ENCODE measurements at regions of chr1 and their contacts with region 1.

Region 1: GRCh38 chr1:203692565-203693470 is 66.2 kb downstream of the ATP2B4 start:
- DNase-seq: peak; percentile 97
- H3K4me3 ChIP-seq: no peak overlapping the region
- H3K27ac ChIP-seq: peak overlapping the region; percentile 97
- H3K4me1 ChIP-seq: peaks cover 28% of the 10 kb centered on the region
- H3K27me3 ChIP-seq: no peaks in the 10 kb centered on the region
- CTCF ChIP-seq: no peak

Region 2: DNA sequence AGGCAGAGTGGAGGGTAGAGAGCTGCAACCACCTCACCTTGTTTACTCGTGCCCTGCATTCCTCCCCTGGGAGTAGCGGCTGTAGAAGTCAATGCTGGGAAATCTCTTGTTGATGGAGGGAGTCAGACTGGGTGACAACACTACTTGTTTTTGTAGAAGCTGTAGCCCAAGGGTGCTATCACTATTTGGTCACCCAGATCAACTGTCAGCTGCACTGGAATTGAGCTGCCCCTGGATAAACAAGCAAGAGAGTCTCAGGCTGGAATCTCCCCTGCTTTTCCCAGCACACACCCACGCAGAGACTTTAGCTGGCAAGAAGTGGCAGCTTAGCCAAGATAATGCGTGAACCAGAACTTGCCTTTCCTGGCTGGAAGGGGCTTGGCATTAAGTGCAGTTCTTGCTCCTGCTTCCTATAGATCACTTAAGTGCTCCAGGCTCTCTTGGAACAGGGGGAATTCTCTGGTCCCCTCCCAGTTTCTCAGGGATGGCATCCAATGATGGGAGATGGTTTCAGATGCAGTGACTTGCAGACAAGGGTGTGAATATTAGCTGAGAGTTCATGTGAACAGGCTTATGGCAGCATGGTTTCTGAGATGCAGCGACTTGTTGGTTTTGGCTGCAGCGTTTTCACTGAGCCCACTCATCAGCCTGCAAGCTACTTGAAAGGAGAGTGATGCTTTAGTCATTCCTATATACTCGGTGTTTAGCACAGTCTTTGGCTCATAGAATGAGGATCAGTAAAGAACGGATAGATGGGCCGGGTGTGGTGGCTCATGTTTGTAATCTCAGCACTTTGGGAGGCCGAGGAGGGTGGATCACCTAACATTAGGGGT is 49.4 kb before region 1 on chr1:
- CTCF ChIA-PET with region 1: no interaction called
- dilution Hi-C with region 1: no loop called
- in situ Hi-C with region 1: no loop called
- intact Hi-C with region 1: loop called (anchors 1 kb)
- DNase-seq: peak; percentile 86
- H3K4me3 ChIP-seq: no peak overlapping the region
- H3K27ac ChIP-seq: peak overlapping the region; percentile 51
- H3K4me1 ChIP-seq: peaks cover 43% of the 10 kb centered on the region
- H3K27me3 ChIP-seq: no peaks in the 10 kb centered on the region
- CTCF ChIP-seq: no peak

Region 3: DNA sequence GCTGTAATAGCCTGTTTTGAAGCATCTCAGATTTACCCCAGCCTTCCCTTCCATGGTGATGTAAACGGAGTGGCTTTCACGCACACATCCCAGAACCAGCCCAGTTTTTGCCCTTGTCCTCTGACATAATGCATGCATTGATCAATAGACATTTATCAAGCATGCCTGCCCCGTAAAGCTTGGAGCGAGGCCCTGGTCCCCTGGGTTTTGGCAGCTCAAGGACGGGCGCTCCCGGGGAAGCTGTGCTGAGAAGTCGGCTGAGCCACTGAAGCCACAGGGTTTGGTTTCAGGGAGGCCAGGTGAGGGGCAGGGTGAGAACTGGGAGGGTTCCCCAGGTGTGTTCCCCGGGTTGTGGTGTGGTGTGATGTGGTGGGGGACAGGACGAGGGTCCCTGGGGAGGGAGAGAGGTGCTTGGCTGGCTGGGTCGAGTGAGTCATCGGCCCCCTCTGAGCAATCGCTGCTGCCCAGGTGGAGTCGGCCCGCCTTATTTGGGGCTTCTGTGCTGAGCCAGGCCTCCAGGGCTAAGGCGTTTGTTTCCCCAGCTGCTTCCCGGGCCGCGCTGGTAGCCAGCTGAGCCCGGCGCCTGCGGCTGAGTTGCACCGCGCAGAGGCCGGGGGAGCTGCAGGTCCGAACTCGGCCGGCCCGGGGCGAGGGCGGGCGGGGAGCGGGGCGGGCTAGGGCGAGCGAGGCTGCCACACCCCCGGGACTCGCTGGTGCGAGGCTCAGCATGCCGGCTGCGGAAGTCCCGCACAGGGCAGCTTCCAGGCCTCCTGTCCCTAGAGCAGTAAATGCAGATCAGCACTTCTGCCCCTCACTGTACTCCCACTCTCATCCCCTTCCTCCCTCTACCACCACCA is 42.6 kb before region 1 on chr1:
- CTCF ChIA-PET with region 1: no interaction called
- dilution Hi-C with region 1: no loop called
- in situ Hi-C with region 1: no loop called
- intact Hi-C with region 1: loop called (anchors 1 kb)
- DNase-seq: peak; percentile 96
- H3K4me3 ChIP-seq: peak overlapping the region in 1 of 3 experiments; percentile 32
- H3K27ac ChIP-seq: peak overlapping the region; percentile 94
- H3K4me1 ChIP-seq: peaks cover 35% of the 10 kb centered on the region
- H3K27me3 ChIP-seq: no peaks in the 10 kb centered on the region
- CTCF ChIP-seq: no peak

Region 4: DNA sequence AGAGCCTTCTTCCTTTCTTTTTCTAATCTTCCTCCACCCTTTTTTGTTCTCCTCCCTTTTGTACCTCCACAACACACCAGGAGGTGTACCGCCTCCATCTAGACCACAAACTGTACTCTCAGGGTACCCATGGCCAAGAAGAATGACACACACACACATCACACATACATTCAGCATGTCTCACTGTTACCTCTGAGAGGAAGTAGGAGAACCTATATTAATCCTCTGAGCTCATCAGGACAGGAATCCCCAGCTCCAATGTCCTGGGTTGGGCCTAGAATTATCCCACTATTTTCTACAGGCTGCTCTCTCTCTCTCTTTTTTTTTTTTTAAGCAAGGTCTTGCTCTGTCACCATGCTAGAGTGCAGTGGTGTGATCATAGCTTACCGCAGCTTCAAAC is 29.5 kb before region 1 on chr1:
- CTCF ChIA-PET with region 1: interaction called, 3 read pairs
- dilution Hi-C with region 1: no loop called
- in situ Hi-C with region 1: no loop called
- intact Hi-C with region 1: loop called (anchors 1 kb)
- DNase-seq: peak; percentile 100
- H3K4me3 ChIP-seq: no peak overlapping the region
- H3K27ac ChIP-seq: peak overlapping the region; percentile 97
- H3K4me1 ChIP-seq: peaks cover 34% of the 10 kb centered on the region
- H3K27me3 ChIP-seq: no peaks in the 10 kb centered on the region
- CTCF ChIP-seq: peak; percentile 10 to 42

Region 5: GRCh38 chr1:203673550-203674427 is 19.0 kb before region 1 on chr1:
- CTCF ChIA-PET with region 1: no interaction called
- dilution Hi-C with region 1: no loop called
- in situ Hi-C with region 1: no loop called
- intact Hi-C with region 1: loop called (anchors 1 kb)
- DNase-seq: peak; percentile 96
- H3K4me3 ChIP-seq: no peak overlapping the region
- H3K27ac ChIP-seq: peak overlapping the region; percentile 86
- H3K4me1 ChIP-seq: peaks cover 37% of the 10 kb centered on the region
- H3K27me3 ChIP-seq: no peaks in the 10 kb centered on the region
- CTCF ChIP-seq: peak in 1 of 2 donors; percentile 49